Activated CD8-positive, alpha-beta memory T cell treated with anti-CD3 and anti-CD28 coated beads, Interleukin-2, amount 10 ng/mL, durations not matched to agents 7 days and 5 days (primary cell): ENCODE measurements at regions of chr16 and their contacts with region 1.

Region 1: GRCh38 chr16:10971560-10971961 is 27.2 kb downstream of the CLEC16A start:
- DNase-seq: no peak
- ATAC-seq: no peak
- H3K4me3 Mint-ChIP-seq: no peak overlapping the region
- H3K27ac Mint-ChIP-seq: peak overlapping the region; percentile 86
- H3K4me1 Mint-ChIP-seq: peaks cover 73% of the 10 kb centered on the region
- H3K27me3 Mint-ChIP-seq: no peaks in the 10 kb centered on the region

Region 2: GRCh38 chr16:10871149-10871991 is 100.2 kb before region 1 on chr16:
- CTCF ChIA-PET with region 1: no interaction called
- DNase-seq: peak; percentile 94
- ATAC-seq: peak; percentile 81
- H3K4me3 Mint-ChIP-seq: peak overlapping the region; percentile 47
- H3K27ac Mint-ChIP-seq: peak overlapping the region; percentile 96
- H3K4me1 Mint-ChIP-seq: peaks cover 92% of the 10 kb centered on the region
- H3K27me3 Mint-ChIP-seq: no peaks in the 10 kb centered on the region

Region 3: GRCh38 chr16:10981697-10982216 is 10.2 kb after region 1 on chr16:
- CTCF ChIA-PET with region 1: interaction called, 45 read pairs
- DNase-seq: peak; percentile 87
- ATAC-seq: peak; percentile 89
- H3K4me3 Mint-ChIP-seq: peak overlapping the region; percentile 58
- H3K27ac Mint-ChIP-seq: peak overlapping the region; percentile 81
- H3K4me1 Mint-ChIP-seq: peaks cover 85% of the 10 kb centered on the region
- H3K27me3 Mint-ChIP-seq: no peaks in the 10 kb centered on the region

Region 4: GRCh38 chr16:11051879-11052808 is 80.6 kb after region 1 on chr16:
- CTCF ChIA-PET with region 1: interaction called, 10 read pairs
- DNase-seq: peak; percentile 97
- ATAC-seq: peak; percentile 79
- H3K4me3 Mint-ChIP-seq: peak overlapping the region; percentile 58
- H3K27ac Mint-ChIP-seq: peak overlapping the region; percentile 92
- H3K4me1 Mint-ChIP-seq: peaks cover 97% of the 10 kb centered on the region
- H3K27me3 Mint-ChIP-seq: no peaks in the 10 kb centered on the region

Region 5: GRCh38 chr16:11094072-11094856 is 122.7 kb after region 1 on chr16:
- CTCF ChIA-PET with region 1: interaction called, 14 read pairs
- DNase-seq: peak; percentile 88
- ATAC-seq: peak; percentile 85
- H3K4me3 Mint-ChIP-seq: peak overlapping the region; percentile 25
- H3K27ac Mint-ChIP-seq: peak overlapping the region; percentile 93
- H3K4me1 Mint-ChIP-seq: peaks cover 90% of the 10 kb centered on the region
- H3K27me3 Mint-ChIP-seq: no peaks in the 10 kb centered on the region

Region 6: GRCh38 chr16:11356573-11357331 is 385.2 kb after region 1 on chr16:
- CTCF ChIA-PET with region 1: interaction called, 34 read pairs
- DNase-seq: peak; percentile 70
- ATAC-seq: no peak
- H3K4me3 Mint-ChIP-seq: no peak overlapping the region
- H3K27ac Mint-ChIP-seq: no peak overlapping the region
- H3K4me1 Mint-ChIP-seq: peaks cover 69% of the 10 kb centered on the region
- H3K27me3 Mint-ChIP-seq: peaks cover 46% of the 10 kb centered on the region